Activated CD8-positive, alpha-beta memory T cell treated with anti-CD3 and anti-CD28 coated beads, Interleukin-2, amount 10 ng/mL, durations not matched to agents 7 days and 5 days (primary cell): ENCODE measurements at regions of chr5 and their contacts with region 1.

Region 1: DNA sequence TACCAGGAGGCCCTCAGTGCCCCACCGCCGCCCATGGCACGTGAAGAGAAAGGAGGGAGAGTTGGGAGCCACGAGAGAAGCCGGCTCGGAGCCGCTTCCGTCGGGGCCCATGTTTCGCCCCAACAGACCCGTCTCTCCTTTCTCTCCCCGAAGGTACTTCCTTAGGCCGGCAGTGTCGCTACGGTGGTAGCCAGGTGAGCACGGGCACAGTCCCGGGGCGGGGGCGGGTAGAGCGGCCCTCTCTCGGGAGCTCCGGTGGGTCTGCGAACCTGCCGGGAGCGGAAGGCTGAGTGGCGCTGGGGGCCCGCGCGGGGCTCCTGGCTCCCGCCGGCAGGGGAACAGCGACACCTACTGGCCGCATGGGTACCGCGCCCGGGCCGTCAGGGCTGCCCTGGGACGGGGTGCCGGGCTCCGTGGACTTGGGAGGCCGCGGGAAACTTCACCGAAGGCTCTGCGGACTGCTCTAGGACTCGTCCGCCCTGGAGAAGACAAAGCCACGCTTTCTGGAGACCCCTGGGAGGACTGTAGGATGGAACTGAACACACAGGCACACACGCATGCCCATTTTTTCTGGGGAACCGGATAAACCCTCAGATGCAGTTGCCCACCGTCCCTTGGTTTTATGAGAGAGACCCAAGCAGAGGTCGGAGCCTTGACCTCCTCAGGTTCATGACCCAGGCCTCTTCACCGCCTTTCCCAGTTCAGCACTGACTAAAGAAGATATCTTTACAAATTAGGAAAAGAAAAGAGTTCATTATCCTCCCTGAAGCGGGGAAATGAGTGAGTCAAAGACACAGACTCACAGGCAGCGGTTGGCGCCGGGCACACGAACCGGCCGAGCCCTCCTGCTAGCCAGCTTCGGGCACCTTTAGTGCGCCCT is 202.5 kb downstream of the MEF2C start:
- DNase-seq: peak; percentile 82
- ATAC-seq: peak; percentile 96
- H3K4me3 Mint-ChIP-seq: no peak overlapping the region
- H3K27ac Mint-ChIP-seq: no peak overlapping the region
- H3K4me1 Mint-ChIP-seq: peaks cover 7% of the 10 kb centered on the region
- H3K27me3 Mint-ChIP-seq: peaks cover 84% of the 10 kb centered on the region

Region 2: GRCh38 chr5:87780831-87781760 is 899.4 kb before region 1 on chr5:
- CTCF ChIA-PET with region 1: interaction called, 25 read pairs
- DNase-seq: peak; percentile 82
- ATAC-seq: peak; percentile 98
- H3K4me3 Mint-ChIP-seq: no peak overlapping the region
- H3K27ac Mint-ChIP-seq: no peak overlapping the region
- H3K4me1 Mint-ChIP-seq: peaks cover 4% of the 10 kb centered on the region
- H3K27me3 Mint-ChIP-seq: peaks cover 21% of the 10 kb centered on the region

Region 3: DNA sequence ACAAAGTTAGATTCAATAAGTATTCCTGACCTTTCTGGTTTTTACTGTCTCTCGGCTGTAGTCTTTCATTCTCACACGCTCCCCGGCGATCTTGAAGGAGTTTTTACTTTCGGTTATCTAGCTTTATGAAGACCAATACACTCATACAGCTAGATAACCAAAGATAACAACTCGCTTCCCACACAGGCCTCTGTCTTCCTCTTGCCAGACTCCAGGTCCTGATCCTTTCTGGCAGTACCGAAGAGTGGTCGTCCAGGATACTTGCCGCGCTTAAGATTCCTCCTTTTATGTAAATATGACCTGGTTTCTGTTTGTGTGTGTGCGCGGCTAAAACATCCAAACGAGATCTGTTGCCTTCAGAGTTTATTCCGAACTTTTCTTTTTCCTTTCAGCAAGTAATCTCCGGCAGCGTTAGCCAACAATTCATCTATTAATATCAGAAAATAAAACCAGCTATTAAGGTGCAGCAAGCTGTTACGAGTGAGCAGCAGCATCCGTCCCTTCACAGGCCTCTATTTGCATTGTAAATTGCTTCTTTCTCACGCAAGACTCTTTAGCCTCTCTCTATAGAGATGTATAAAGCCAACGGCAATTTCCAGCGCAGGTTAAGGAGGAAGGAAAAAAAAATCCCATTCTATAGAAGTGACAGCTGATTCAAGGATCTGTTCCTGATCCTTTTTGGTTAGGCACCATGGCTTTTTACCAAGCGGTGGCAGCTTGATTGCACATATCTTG is 13.6 kb before region 1 on chr5:
- CTCF ChIA-PET with region 1: interaction called, 19 read pairs
- DNase-seq: no peak
- ATAC-seq: peak; percentile 55
- H3K4me3 Mint-ChIP-seq: peak overlapping the region; percentile 77
- H3K27ac Mint-ChIP-seq: peak overlapping the region; percentile 7
- H3K4me1 Mint-ChIP-seq: peaks cover 25% of the 10 kb centered on the region
- H3K27me3 Mint-ChIP-seq: peaks cover 87% of the 10 kb centered on the region

Region 4: DNA sequence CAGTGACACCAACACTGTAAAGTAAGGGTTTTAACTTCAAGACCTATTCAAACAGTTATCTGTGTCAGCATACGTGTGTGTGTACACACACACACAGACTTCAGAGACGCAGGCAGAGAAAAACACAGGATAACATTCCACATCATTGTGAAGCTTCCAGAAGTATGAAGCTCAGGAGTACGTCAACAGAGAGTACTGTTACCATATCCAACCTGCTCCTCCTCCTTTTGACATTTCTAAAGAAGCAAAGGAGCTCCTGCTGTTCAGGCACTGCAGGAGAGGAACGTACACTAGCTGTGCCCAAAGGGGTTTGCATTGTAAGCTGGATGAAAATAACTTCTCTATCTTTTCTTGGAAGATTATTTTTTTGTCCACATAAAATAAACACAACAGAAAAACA is 21.8 kb after region 1 on chr5:
- CTCF ChIA-PET with region 1: no interaction called
- DNase-seq: no peak
- ATAC-seq: no peak
- H3K4me3 Mint-ChIP-seq: no peak overlapping the region
- H3K27ac Mint-ChIP-seq: no peak overlapping the region
- H3K4me1 Mint-ChIP-seq: no peaks in the 10 kb centered on the region
- H3K27me3 Mint-ChIP-seq: peaks cover 35% of the 10 kb centered on the region